ENCODE measurements at regions of chr10 and their contacts with region 1.

Region 1: GRCh38 chr10:98309366-98310355 is 41.7 kb upstream of the LOXL4 start:
- DNase-seq: no peak
- H3K4me3 ChIP-seq: peak overlapping the region in 1 of 4 donors; percentile 43
- H3K27ac ChIP-seq: no peak overlapping the region
- H3K4me1 ChIP-seq: peaks cover 4 to 29% (median 8%) of the 10 kb centered on the region in 3 donors
- H3K27me3 ChIP-seq: peaks cover 0 to 83% (median 2%) of the 10 kb centered on the region in 4 donors
- CTCF ChIP-seq: peak; percentile 43 to 78 (median 72)
- POLR2A ChIP-seq: no peak

Region 2: GRCh38 chr10:98168147-98168546 is 141.5 kb before region 1 on chr10:
- intact Hi-C with region 1: loop called (anchors 10 kb)
- DNase-seq: no peak
- H3K4me3 ChIP-seq: no peak overlapping the region
- H3K27ac ChIP-seq: no peak overlapping the region
- H3K4me1 ChIP-seq: peaks cover 0 to 14% (median 0%) of the 10 kb centered on the region in 3 donors
- H3K27me3 ChIP-seq: no peaks in the 10 kb centered on the region
- CTCF ChIP-seq: no peak
- POLR2A ChIP-seq: no peak

Region 3: GRCh38 chr10:98269072-98269912 is 40.4 kb before region 1 on chr10:
- intact Hi-C with region 1: loop called (anchors 5 kb)
- DNase-seq: no peak
- H3K4me3 ChIP-seq: peak overlapping the region in 2 of 4 donors; percentile 52 to 73
- H3K27ac ChIP-seq: peak overlapping the region in 3 of 4 donors; percentile 58 to 89 (median 84)
- H3K4me1 ChIP-seq: peaks cover 15 to 54% (median 21%) of the 10 kb centered on the region in 3 donors
- H3K27me3 ChIP-seq: peaks cover 0 to 67% (median 0%) of the 10 kb centered on the region in 4 donors
- CTCF ChIP-seq: no peak
- POLR2A ChIP-seq: no peak

Region 4: DNA sequence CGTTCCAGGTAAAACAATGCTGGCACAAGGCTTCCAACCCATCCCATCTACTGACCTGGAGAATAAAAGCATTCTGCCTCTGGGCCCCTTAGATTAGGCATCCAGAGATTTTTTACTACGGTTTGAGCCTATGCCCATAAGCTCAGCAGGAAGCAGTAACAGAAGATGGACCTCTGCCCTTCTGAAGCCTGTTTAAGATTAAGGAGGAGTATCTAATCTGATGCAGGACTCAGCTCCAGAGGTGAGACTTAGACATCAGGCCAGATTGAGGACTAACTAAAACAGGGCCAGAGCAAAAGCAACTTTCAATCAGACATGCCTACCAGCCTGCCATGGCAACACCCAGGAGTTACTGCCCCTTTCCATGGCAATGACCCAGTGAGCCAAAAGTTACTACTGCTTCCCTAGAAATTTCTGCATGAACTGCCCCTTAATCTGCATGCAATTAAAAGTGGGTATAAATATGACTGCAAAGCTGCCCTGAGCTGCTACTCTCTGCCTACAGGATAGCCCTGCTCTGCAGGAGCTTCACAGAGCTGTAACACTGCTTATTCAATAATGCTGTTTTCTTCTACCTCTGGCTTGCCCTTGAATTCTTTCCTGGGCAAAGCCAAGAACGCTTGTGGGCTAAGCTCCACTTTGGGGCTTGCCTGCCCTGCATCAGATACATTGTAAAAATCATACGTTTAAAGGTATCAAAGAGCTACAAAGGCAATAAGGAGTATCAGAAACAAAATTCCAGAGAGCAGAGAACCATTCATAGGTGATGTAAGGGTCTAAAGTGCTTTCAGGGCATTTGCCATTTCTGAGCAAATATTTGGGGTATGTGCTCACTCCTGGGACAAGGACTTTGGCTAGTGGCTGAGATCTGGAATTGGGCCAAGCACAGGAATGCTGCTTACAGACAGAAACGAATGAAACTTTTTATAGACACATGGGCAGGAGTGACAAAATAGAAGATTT is 994.5 kb after region 1 on chr10:
- intact Hi-C with region 1: no loop called
- DNase-seq: no peak
- H3K4me3 ChIP-seq: no peak overlapping the region
- H3K27ac ChIP-seq: no peak overlapping the region
- H3K4me1 ChIP-seq: no peaks in the 10 kb centered on the region
- H3K27me3 ChIP-seq: peaks cover 0 to 4% (median 0%) of the 10 kb centered on the region in 4 donors
- CTCF ChIP-seq: no peak
- POLR2A ChIP-seq: no peak